ENCODE measurements at regions of chr12 and their contacts with region 1.

Region 1: GRCh38 chr12:6927379-6928024 is at the start of gene ATN1:
- DNase-seq: no peak
- ATAC-seq: peak; percentile 10
- H3K4me3 ChIP-seq: peak within 1 kb of the TSS; percentile 79 to 92
- H3K27ac ChIP-seq: peak within 1 kb of the TSS; percentile 99
- H3K4me1 ChIP-seq: peaks cover 25 to 53% of the 10 kb centered on the region in 2 experiments
- H3K27me3 ChIP-seq: no peaks in the 10 kb centered on the region
- CTCF ChIP-seq: no peak
- POLR2A ChIP-seq: no peak
- RAD21 ChIP-seq: no peak
- total RNA-seq, gene ATN1: 104 TPM

Region 2: GRCh38 chr12:6890789-6891645 is 36.5 kb before region 1 on chr12:
- CTCF ChIA-PET with region 1: interaction called, 14 read pairs
- POLR2A ChIA-PET with region 1: interaction called, 9 read pairs
- RAD21 ChIA-PET with region 1: no interaction called
- intact Hi-C with region 1: no loop called
- DNase-seq: peak; percentile 86
- ATAC-seq: peak; percentile 97
- H3K4me3 ChIP-seq: peak overlapping the region; percentile 34 to 52
- H3K27ac ChIP-seq: peak overlapping the region; percentile 87
- H3K4me1 ChIP-seq: peaks cover 12 to 18% of the 10 kb centered on the region in 2 experiments
- H3K27me3 ChIP-seq: no peaks in the 10 kb centered on the region
- CTCF ChIP-seq: peak; percentile 70 to 82 (median 77)
- POLR2A ChIP-seq: peak; percentile 96
- RAD21 ChIP-seq: peak; percentile 72

Region 3: DNA sequence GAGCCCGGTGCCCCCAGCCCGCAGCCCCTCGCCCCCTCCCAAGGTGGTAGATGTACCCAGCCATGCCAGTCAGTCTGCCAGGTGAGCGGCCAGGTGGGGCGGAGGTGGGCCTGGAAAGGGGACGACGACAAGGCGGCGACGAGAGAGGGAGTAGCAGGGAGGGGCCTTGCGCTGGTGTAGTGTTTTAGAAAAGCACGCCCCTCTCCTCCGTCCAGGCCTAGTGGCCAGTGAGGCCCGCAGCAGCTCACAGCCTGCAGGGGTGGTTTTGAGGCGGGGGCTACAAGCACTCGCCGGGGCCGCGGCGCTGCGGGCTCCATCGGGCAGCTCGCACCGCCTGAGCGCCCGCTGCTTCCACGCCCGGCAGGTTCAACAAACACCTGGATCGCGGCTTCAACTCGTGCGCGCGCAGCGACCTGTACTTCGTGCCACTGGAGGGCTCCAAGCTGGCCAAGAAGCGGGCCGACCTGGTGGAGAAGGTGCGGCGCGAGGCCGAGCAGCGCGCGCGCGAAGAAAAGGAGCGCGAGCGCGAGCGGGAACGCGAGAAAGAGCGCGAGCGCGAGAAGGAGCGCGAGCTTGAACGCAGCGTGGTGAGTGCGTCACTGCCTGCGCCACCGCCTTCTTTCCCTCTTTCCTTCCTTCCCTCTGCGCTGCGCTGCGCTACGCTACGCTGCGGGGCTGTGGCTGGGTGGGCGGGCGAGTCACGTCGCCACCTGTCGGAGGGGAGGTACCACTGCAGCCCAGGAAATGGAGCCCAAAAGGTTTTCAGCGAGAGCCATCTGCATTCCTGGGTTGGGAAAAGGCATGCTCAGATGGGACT is 10.2 kb after region 1 on chr12:
- CTCF ChIA-PET with region 1: interaction called, 23 read pairs
- POLR2A ChIA-PET with region 1: interaction called, 96 read pairs
- RAD21 ChIA-PET with region 1: interaction called, 3 to 5 read pairs
- intact Hi-C with region 1: loop called (anchors 2 kb)
- DNase-seq: peak; percentile 92
- ATAC-seq: peak; percentile 91
- H3K4me3 ChIP-seq: peak overlapping the region; percentile 61 to 68
- H3K27ac ChIP-seq: peak overlapping the region; percentile 93
- H3K4me1 ChIP-seq: peaks cover 7 to 36% of the 10 kb centered on the region in 2 experiments; a peak in 3 of 4 replicates
- H3K27me3 ChIP-seq: no peaks in the 10 kb centered on the region
- CTCF ChIP-seq: peak in 2 of 3 experiments; percentile 91 to 98; a peak in 4 of 6 replicates
- POLR2A ChIP-seq: peak; percentile 75
- RAD21 ChIP-seq: no peak

Region 4: DNA sequence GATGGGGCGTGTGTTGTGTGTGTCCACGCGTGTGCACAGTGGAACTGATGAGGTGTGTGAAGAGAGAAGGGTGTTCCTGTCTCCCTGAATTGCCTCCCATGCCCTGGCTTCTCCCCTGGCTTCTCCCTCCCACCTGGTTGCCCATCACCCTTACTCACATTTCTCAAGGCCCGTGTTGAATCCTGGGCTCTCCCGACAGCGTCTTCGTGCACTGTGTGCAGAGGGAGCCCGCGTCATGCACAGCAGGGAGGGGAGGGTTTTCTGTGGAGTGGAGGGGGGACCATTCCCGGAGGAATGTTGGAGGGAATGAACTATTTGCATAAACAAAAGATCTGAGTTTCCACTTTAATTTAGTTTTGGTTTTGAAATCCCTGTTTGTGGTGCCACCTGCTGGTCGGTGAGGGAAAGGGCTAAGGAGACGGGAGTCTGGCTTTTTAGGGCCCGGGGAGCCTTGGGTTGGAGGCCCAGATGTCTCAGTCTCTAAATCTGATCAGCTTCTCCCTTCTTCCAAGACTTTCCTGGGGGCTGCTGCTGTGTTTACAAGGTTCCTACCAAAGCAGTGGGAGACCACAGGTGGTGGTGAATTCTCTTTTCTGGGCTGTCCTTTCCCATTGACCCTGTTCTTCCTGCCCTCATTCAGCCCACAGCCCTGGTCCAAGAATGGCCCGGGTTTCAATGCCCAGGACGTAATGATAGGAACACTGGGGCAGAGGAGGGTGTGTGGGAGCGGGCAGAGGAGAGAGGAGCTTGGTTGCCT is 164.9 kb after region 1 on chr12 and contains the start of gene C1R:
- CTCF ChIA-PET with region 1: no interaction called
- POLR2A ChIA-PET with region 1: no interaction called
- RAD21 ChIA-PET with region 1: interaction called in 1 of 2 experiments, 3 read pairs
- intact Hi-C with region 1: loop called (anchors 1 kb)
- DNase-seq: no peak
- ATAC-seq: peak; percentile 85
- H3K4me3 ChIP-seq: no peak within 1 kb of the TSS
- H3K27ac ChIP-seq: peak within 1 kb of the TSS; percentile 13; the same call in 1 of the 2 replicates
- H3K4me1 ChIP-seq: peaks cover 0 to 6% of the 10 kb centered on the region in 2 experiments; a peak in 1 of 4 replicates
- H3K27me3 ChIP-seq: 0 out of 2 replicates have a peak, but pooled peaks cover 2% of the 10 kb centered on the region
- CTCF ChIP-seq: peak; percentile 84 to 89 (median 87)
- POLR2A ChIP-seq: no peak
- RAD21 ChIP-seq: peak; percentile 84
- total RNA-seq, gene C1R: 4.3 TPM

Region 5: GRCh38 chr12:7108796-7109571 is 181.5 kb after region 1 on chr12 and contains the start of gene C1RL:
- CTCF ChIA-PET with region 1: interaction called, 17 read pairs
- POLR2A ChIA-PET with region 1: interaction called, 3 read pairs
- RAD21 ChIA-PET with region 1: no interaction called
- intact Hi-C with region 1: no loop called
- DNase-seq: peak; percentile 50
- ATAC-seq: peak; percentile 69
- H3K4me3 ChIP-seq: peak within 1 kb of the TSS; percentile 85 to 86
- H3K27ac ChIP-seq: peak within 1 kb of the TSS; percentile 88
- H3K4me1 ChIP-seq: peaks cover 4 to 16% of the 10 kb centered on the region in 2 experiments; a peak in 3 of 4 replicates
- H3K27me3 ChIP-seq: no peaks in the 10 kb centered on the region
- CTCF ChIP-seq: peak; percentile 69 to 96 (median 95); a peak in 5 of 6 replicates
- POLR2A ChIP-seq: no peak
- RAD21 ChIP-seq: peak; percentile 71
- total RNA-seq, gene C1RL: 25.9 TPM